ENCODE measurements at regions of chr5 and their contacts with region 1.

Region 1: GRCh38 chr5:181191529-181192394 is 13.2 kb downstream of the TRIM7 start:
- DNase-seq: peak in 1 of 2 donors; percentile 99
- H3K4me3 ChIP-seq: peak overlapping the region; percentile 83 to 86
- H3K27ac ChIP-seq: peak overlapping the region; percentile 93
- H3K4me1 ChIP-seq: peaks cover 21% of the 10 kb centered on the region
- H3K27me3 ChIP-seq: no peaks in the 10 kb centered on the region
- CTCF ChIP-seq: no peak
- POLR2A ChIP-seq: peak in 1 of 2 donors; percentile 62

Region 2: DNA sequence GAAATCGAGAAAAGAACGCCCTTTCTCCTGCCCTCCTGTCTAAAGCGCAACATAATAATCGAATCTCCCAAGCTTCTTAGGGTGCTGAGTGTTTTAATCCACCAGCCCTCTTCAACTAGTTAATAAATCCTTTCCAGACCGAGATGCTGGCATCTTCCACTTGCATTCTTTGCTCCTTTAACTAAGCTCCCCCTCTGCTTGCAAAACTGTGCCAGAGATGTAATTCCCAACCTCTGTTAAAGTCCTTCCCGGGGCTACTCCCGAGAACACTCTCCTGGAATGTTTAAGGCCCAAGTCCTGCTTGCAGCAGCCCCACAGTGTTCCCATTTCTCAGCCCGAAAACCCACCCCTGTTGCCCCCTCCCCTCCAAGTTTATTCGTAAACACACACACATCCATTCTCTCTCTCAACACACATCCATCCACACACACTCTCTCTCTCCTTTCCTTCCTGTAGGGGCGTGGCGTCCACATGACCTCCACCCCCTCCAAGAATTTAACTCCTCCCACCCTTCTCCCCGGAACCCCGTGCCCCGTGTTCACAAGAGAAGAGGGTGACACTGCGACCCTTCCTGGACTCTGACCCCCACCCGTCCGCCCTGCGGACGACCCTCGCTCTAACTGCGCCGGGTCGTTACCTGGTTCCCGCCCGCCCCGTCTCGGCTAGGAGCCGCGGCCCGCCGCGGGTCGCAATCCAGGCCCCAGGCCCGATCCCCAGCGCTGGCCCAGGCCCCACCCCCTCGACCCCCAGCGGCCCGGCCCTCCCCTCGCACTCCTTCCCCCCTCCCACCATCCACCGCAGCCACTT is 382.2 kb before region 1 on chr5:
- intact Hi-C with region 1: loop called (anchors 10 kb)
- DNase-seq: peak in 1 of 2 donors; percentile 96
- H3K4me3 ChIP-seq: peak overlapping the region; percentile 64 to 73
- H3K27ac ChIP-seq: peak overlapping the region; percentile 99
- H3K4me1 ChIP-seq: peaks cover 64% of the 10 kb centered on the region
- H3K27me3 ChIP-seq: no peaks in the 10 kb centered on the region
- CTCF ChIP-seq: no peak
- POLR2A ChIP-seq: peak in 1 of 2 donors; percentile 40

Region 3: GRCh38 chr5:181020688-181021087 is 171.1 kb before region 1 on chr5:
- intact Hi-C with region 1: no loop called
- DNase-seq: no peak
- H3K4me3 ChIP-seq: no peak overlapping the region
- H3K27ac ChIP-seq: no peak overlapping the region
- H3K4me1 ChIP-seq: no peaks in the 10 kb centered on the region
- H3K27me3 ChIP-seq: no peaks in the 10 kb centered on the region
- CTCF ChIP-seq: no peak
- POLR2A ChIP-seq: no peak

Region 4: GRCh38 chr5:181221787-181222629 is 30.2 kb after region 1 on chr5:
- intact Hi-C with region 1: loop called (anchors 1 kb)
- DNase-seq: no peak
- H3K4me3 ChIP-seq: peak overlapping the region; percentile 75 to 76
- H3K27ac ChIP-seq: peak overlapping the region; percentile 94
- H3K4me1 ChIP-seq: peaks cover 38% of the 10 kb centered on the region
- H3K27me3 ChIP-seq: no peaks in the 10 kb centered on the region
- CTCF ChIP-seq: no peak
- POLR2A ChIP-seq: no peak

Measured in vagina (tissue), 2 donors.